GM12878 (cell line): ENCODE measurements at regions of chr13 and their contacts with region 1.

Region 1: DNA sequence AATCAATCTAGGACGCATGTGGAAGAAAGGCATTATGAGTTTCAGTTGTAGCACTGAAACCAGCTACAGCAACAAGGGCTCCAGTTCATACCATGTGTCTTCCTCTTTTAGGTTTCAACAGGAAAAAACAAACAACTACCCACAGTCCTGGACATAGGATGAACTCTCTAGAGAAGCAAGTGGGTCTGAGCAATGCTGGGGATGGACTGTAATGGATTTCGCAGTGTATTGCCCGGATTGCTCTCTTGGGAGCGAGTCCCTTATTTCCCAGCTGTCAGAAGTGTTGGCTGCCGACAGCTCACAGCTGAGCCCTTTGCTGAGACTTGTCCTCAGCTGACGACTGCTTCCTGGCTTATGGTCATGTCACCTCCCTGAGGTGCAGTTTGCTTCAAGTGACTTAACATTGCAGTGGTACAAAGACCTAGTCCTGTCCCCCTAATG is 12.1 kb upstream of the MYCBP2 start:
- DNase-seq: no peak
- ATAC-seq: peak; percentile 78
- H3K4me3 ChIP-seq: peak overlapping the region; percentile 45
- H3K27ac ChIP-seq: peak overlapping the region; percentile 89
- H3K4me1 ChIP-seq: peaks cover 37% of the 10 kb centered on the region
- H3K27me3 ChIP-seq: no peaks in the 10 kb centered on the region
- CTCF ChIP-seq: no peak
- EP300 ChIP-seq: no peak
- POLR2A ChIP-seq: 0 out of 2 replicates have a peak, but pooled peaks have one; percentile 41
- RAD21 ChIP-seq: peak; percentile 28; the same call in 1 of the 2 replicates

Region 2: GRCh38 chr13:77318741-77319140 is 20.2 kb before region 1 on chr13:
- CTCF ChIA-PET with region 1: interaction called, 9 read pairs
- POLR2A ChIA-PET with region 1: interaction called, 3 read pairs
- RAD21 ChIA-PET with region 1: interaction called, 7 read pairs
- SMC1A ChIA-PET with region 1: interaction called, 20 read pairs
- in situ Hi-C with region 1: no loop called
- intact Hi-C with region 1: no loop called
- DNase-seq: no peak
- ATAC-seq: no peak; the same call in 2 of the 3 replicates
- H3K4me3 ChIP-seq: no peak overlapping the region
- H3K27ac ChIP-seq: no peak overlapping the region
- H3K4me1 ChIP-seq: 0 out of 2 replicates have a peak, but pooled peaks cover 3% of the 10 kb centered on the region
- H3K27me3 ChIP-seq: no peaks in the 10 kb centered on the region
- CTCF ChIP-seq: no peak
- EP300 ChIP-seq: no peak
- POLR2A ChIP-seq: no peak
- RAD21 ChIP-seq: no peak

Region 3: DNA sequence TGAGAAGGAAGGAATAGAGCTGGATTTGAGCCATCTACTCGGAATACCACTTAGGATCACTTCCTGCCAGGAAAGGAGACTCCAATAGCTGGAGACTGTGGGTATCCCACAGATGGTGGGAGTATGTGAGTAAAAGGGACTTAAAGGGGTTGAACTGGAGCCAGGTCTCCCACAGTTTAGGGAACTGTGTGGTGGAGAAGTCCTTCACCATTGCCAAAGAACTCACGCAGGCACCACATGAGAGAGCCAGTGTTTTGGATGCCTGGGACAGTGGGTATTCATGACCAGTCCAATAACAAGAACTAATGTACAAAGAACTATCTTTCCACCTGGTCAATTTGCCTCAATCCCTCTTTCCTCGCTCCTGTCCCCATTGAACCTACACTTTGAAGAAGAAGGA is 12.3 kb after region 1 on chr13:
- CTCF ChIA-PET with region 1: no interaction called
- POLR2A ChIA-PET with region 1: interaction called, 5 read pairs
- RAD21 ChIA-PET with region 1: interaction called, 3 read pairs
- SMC1A ChIA-PET with region 1: interaction called, 17 read pairs
- in situ Hi-C with region 1: no loop called
- intact Hi-C with region 1: no loop called
- DNase-seq: no peak
- ATAC-seq: no peak
- H3K4me3 ChIP-seq: no peak overlapping the region
- H3K27ac ChIP-seq: no peak overlapping the region
- H3K4me1 ChIP-seq: no peaks in the 10 kb centered on the region
- H3K27me3 ChIP-seq: no peaks in the 10 kb centered on the region
- CTCF ChIP-seq: no peak
- EP300 ChIP-seq: no peak
- POLR2A ChIP-seq: no peak
- RAD21 ChIP-seq: no peak

Region 4: DNA sequence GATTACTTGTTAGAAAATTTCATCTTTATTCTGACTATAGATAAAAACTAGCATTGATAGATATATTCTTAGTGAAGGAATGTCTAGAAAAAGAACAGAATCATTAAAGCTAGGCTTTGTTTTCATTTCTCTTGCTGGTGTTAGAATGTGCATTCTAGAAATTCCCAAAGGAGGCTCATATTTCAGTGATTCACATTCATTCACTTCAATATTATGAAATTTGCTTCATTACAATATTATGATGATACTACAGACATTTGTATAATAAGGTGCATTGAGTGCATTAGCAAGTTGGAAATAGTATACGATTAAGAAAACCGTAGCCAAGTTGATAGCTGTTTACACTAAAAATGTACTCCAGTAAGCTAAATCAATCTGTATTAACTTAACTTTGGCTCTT is 58.7 kb after region 1 on chr13:
- CTCF ChIA-PET with region 1: no interaction called
- POLR2A ChIA-PET with region 1: no interaction called
- RAD21 ChIA-PET with region 1: no interaction called
- SMC1A ChIA-PET with region 1: no interaction called
- in situ Hi-C with region 1: no loop called
- intact Hi-C with region 1: no loop called
- DNase-seq: no peak
- ATAC-seq: no peak
- H3K4me3 ChIP-seq: no peak overlapping the region
- H3K27ac ChIP-seq: no peak overlapping the region
- H3K4me1 ChIP-seq: no peaks in the 10 kb centered on the region
- H3K27me3 ChIP-seq: no peaks in the 10 kb centered on the region
- CTCF ChIP-seq: no peak
- EP300 ChIP-seq: no peak
- POLR2A ChIP-seq: no peak
- RAD21 ChIP-seq: no peak

Region 5: GRCh38 chr13:77415253-77416071 is 76.5 kb after region 1 on chr13:
- CTCF ChIA-PET with region 1: interaction called, 5 read pairs
- POLR2A ChIA-PET with region 1: interaction called, 5 read pairs
- RAD21 ChIA-PET with region 1: interaction called, 13 read pairs
- SMC1A ChIA-PET with region 1: interaction called, 13 read pairs
- in situ Hi-C with region 1: no loop called
- intact Hi-C with region 1: no loop called
- DNase-seq: peak; percentile 45
- ATAC-seq: peak; percentile 93
- H3K4me3 ChIP-seq: no peak overlapping the region
- H3K27ac ChIP-seq: peak overlapping the region; percentile 26; the same call in 1 of the 2 replicates
- H3K4me1 ChIP-seq: peaks cover 10% of the 10 kb centered on the region
- H3K27me3 ChIP-seq: no peaks in the 10 kb centered on the region
- CTCF ChIP-seq: no peak
- EP300 ChIP-seq: no peak
- POLR2A ChIP-seq: 0 out of 2 replicates have a peak, but pooled peaks have one; percentile 32
- RAD21 ChIP-seq: 0 out of 2 replicates have a peak, but pooled peaks have one; percentile 17

Region 6: DNA sequence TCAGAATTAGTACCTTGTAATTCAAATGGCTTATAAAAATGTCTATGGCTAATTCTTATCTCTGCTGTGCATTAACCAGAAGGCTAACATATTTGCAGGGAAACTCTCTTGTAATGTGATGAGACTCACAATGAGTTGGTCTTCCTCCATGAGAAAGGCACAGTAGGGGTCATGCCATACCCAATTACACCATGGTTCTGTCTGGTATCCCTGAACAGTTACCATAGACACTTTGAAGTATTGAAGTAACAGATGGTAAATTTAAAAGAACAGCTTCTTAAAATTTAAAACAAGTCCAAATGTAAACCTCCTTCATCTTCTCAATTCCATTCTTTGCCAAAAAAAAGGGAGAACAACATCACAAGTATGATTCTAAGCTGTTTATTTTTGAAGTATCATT is 335.9 kb after region 1 on chr13:
- CTCF ChIA-PET with region 1: no interaction called
- POLR2A ChIA-PET with region 1: no interaction called
- RAD21 ChIA-PET with region 1: no interaction called
- SMC1A ChIA-PET with region 1: no interaction called
- in situ Hi-C with region 1: no loop called
- intact Hi-C with region 1: no loop called
- DNase-seq: no peak
- ATAC-seq: no peak
- H3K4me3 ChIP-seq: no peak overlapping the region
- H3K27ac ChIP-seq: no peak overlapping the region
- H3K4me1 ChIP-seq: no peaks in the 10 kb centered on the region
- H3K27me3 ChIP-seq: no peaks in the 10 kb centered on the region
- CTCF ChIP-seq: no peak
- EP300 ChIP-seq: no peak
- POLR2A ChIP-seq: no peak
- RAD21 ChIP-seq: no peak